HepG2 (cell line): ENCODE measurements at regions of chr20 and their contacts with region 1.

Region 1: DNA sequence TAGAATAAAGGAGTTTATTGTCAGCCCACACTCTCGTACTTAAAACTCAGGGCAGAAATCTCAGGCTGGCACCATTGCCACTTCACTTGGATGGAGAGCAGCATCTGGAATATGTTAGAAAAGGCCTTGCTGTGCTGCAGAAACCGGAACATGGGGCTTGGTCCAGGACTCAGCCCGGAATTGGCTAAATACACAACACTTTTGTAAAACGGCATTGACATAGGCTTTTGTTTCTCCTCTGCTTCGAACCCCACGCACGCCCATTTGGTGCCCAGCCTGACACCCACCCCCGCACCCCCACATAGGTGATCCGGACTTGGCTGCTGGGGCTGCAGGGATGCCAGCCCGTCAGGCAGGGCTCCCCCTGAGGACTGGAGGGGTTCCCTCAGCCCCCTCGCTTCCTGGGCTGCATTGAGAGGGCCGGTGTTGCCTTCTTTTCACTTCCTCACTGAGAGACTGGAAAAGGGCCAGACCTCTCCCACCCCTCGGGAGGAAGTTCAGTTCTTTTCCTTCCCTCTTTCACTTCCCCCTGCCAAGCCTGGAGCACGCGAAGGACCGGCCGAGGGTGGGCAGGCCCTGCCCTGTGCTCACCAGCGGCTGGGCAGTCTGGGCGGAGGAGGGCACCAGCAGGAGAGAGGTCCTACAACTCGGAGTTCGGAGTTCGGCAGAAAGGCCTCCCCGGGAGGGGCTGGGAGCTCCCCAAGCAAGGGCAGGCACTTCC is 17.9 kb upstream of the CST3 start:
- DNase-seq: no peak
- ATAC-seq: no peak
- H3K4me3 ChIP-seq: no peak overlapping the region
- H3K27ac ChIP-seq: no peak overlapping the region
- H3K4me1 ChIP-seq: peaks cover 89% of the 10 kb centered on the region
- H3K27me3 ChIP-seq: no peaks in the 10 kb centered on the region
- CTCF ChIP-seq: no peak
- EP300 ChIP-seq: no peak
- POLR2A ChIP-seq: no peak
- RAD21 ChIP-seq: no peak

Region 2: GRCh38 chr20:23357767-23358591 is 297.7 kb before region 1 on chr20:
- CTCF ChIA-PET with region 1: no interaction called
- POLR2A ChIA-PET with region 1: interaction called, 3 read pairs
- in situ Hi-C with region 1: no loop called
- intact Hi-C with region 1: loop called (anchors 2 kb)
- DNase-seq: peak; percentile 98
- ATAC-seq: peak; percentile 76
- H3K4me3 ChIP-seq: peak overlapping the region; percentile 55 to 91 (median 65)
- H3K27ac ChIP-seq: peak overlapping the region; percentile 77
- H3K4me1 ChIP-seq: peaks cover 45% of the 10 kb centered on the region
- H3K27me3 ChIP-seq: no peaks in the 10 kb centered on the region; a peak in 1 of 5 replicates
- CTCF ChIP-seq: peak; percentile 52
- EP300 ChIP-seq: 0 out of 4 replicates have a peak, but pooled peaks of 1 of the 2 experiments have one; percentile 9
- POLR2A ChIP-seq: peak; percentile 73 to 85
- RAD21 ChIP-seq: no peak; the same call in 1 of the 2 replicates

Region 3: DNA sequence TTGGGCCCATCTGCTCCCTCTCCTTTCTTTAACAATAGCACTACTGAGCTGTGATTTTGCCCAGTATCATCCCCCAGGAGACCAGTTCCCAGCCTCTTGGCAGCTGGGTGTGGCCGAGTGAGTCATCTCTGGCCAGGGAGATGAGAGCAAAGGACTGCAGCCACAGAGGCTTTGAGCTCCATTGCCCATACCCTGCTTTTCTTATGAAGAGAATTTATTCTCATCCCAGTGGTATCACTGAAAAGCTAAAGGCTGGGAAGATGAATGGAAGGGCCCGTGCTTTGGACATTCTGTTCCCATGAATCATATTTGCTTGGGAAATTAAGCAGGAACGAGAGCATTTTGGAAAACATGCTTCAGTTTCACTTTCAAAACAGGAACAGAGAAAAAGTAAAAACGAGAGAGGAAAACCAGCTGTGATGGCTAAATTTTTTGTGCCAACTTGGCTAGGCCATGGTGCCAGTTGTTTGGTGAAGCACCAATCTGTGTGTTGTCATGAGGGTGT is 32.8 kb before region 1 on chr20:
- CTCF ChIA-PET with region 1: no interaction called
- POLR2A ChIA-PET with region 1: interaction called, 543 read pairs
- in situ Hi-C with region 1: no loop called
- intact Hi-C with region 1: loop called (anchors 5 kb)
- DNase-seq: peak; percentile 72
- ATAC-seq: peak; percentile 78
- H3K4me3 ChIP-seq: peak overlapping the region; percentile 42 to 49 (median 44)
- H3K27ac ChIP-seq: no peak overlapping the region
- H3K4me1 ChIP-seq: peaks cover 73% of the 10 kb centered on the region
- H3K27me3 ChIP-seq: no peaks in the 10 kb centered on the region
- CTCF ChIP-seq: no peak
- EP300 ChIP-seq: no peak
- POLR2A ChIP-seq: no peak
- RAD21 ChIP-seq: no peak

Region 4: DNA sequence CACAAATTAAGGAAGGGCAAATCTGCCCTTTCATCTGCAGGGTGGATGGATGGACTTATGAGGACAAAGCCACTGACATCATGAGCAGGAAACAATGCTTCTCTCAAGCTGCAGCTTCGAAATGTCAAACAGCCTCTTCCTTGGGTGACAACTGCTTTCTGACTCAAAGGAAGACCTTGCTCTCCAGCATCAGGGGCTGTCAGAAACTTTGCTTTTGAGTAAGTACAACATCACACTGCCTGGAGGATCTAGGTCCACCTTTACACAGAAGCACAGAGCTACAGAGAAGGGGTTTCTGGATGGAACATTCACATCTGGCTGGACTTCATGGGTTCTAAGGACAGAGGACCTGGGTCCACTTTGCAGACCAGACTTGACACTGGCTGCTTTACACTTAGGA is 89.2 kb after region 1 on chr20:
- CTCF ChIA-PET with region 1: no interaction called
- POLR2A ChIA-PET with region 1: no interaction called
- in situ Hi-C with region 1: no loop called
- intact Hi-C with region 1: no loop called
- DNase-seq: no peak
- ATAC-seq: no peak
- H3K4me3 ChIP-seq: no peak overlapping the region
- H3K27ac ChIP-seq: no peak overlapping the region
- H3K4me1 ChIP-seq: no peaks in the 10 kb centered on the region
- H3K27me3 ChIP-seq: peaks cover 0 to 9% of the 10 kb centered on the region in 2 experiments; a peak in 2 of 5 replicates
- CTCF ChIP-seq: no peak
- EP300 ChIP-seq: no peak
- POLR2A ChIP-seq: no peak
- RAD21 ChIP-seq: no peak